Activated B cell treated with CpG ODN at 0.5 μM for 24 hours (primary cell): ENCODE measurements at regions of chr20 and their contacts with region 1.

Region 1: DNA sequence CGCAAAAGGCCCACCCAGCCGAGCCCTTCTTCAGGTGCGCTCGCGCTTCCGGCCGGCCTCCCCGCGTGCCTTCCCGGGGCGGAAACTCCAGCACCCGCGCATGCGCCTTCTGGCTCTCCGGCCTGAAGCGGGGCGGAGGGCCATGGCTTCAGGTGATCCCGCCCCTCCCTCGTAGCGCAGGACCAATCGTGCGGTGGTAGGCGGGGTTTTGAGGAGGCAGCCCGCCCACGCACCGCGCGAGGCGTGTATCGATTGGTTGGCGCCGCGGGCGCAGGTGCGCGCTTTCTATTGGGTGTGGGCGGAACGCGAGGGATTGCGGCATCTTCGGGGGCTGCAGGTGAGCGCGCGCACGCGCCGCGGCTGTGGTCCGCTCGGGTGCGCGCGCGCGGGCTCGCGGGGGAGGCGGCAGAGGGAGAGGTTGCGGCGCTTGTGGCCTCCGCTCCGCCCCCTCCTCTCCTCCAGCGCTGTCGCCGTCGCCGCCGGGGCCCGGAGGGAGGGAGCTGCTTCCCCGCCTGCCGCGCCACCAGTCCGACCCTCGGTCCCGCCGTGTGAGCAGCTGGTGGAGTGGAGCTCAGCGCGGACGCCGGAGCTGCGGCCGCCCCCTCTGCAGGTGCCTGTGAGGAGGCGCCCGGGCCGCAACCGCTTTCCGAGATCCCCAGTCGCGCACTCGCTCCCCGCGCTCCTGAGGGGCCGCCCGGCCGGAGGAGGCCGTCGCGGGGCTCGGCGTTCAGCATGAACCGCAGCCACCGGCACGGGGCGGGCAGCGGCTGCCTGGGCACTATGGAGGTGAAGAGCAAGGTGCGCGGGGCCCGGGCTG is at the start of gene PARD6B:
- DNase-seq: peak; percentile 98
- ATAC-seq: peak; percentile 94
- H3K4me3 Mint-ChIP-seq: peak within 1 kb of the TSS; percentile 89
- H3K27ac Mint-ChIP-seq: peak within 1 kb of the TSS; percentile 71
- H3K4me1 Mint-ChIP-seq: peaks cover 16% of the 10 kb centered on the region
- H3K27me3 Mint-ChIP-seq: peaks cover 2% of the 10 kb centered on the region
- CTCF ChIP-seq: no peak
- total RNA-seq, gene PARD6B: 3.8 and 5.7 TPM in 2 replicates

Region 2: GRCh38 chr20:50460460-50461267 is 270.6 kb before region 1 on chr20:
- CTCF ChIA-PET with region 1: no interaction called
- POLR2A ChIA-PET with region 1: no interaction called
- intact Hi-C with region 1: loop called (anchors 5 kb)
- DNase-seq: peak; percentile 69
- ATAC-seq: peak; percentile 86
- H3K4me3 Mint-ChIP-seq: no peak overlapping the region
- H3K27ac Mint-ChIP-seq: no peak overlapping the region
- H3K4me1 Mint-ChIP-seq: peaks cover 5% of the 10 kb centered on the region
- H3K27me3 Mint-ChIP-seq: peaks cover 24% of the 10 kb centered on the region
- CTCF ChIP-seq: peak; percentile 42

Region 3: GRCh38 chr20:50475681-50476292 is 255.5 kb before region 1 on chr20:
- CTCF ChIA-PET with region 1: no interaction called
- POLR2A ChIA-PET with region 1: no interaction called
- intact Hi-C with region 1: no loop called
- DNase-seq: no peak
- ATAC-seq: no peak
- H3K4me3 Mint-ChIP-seq: no peak overlapping the region
- H3K27ac Mint-ChIP-seq: peak overlapping the region; percentile 31
- H3K4me1 Mint-ChIP-seq: peaks cover 51% of the 10 kb centered on the region
- H3K27me3 Mint-ChIP-seq: no peaks in the 10 kb centered on the region
- CTCF ChIP-seq: no peak

Region 4: DNA sequence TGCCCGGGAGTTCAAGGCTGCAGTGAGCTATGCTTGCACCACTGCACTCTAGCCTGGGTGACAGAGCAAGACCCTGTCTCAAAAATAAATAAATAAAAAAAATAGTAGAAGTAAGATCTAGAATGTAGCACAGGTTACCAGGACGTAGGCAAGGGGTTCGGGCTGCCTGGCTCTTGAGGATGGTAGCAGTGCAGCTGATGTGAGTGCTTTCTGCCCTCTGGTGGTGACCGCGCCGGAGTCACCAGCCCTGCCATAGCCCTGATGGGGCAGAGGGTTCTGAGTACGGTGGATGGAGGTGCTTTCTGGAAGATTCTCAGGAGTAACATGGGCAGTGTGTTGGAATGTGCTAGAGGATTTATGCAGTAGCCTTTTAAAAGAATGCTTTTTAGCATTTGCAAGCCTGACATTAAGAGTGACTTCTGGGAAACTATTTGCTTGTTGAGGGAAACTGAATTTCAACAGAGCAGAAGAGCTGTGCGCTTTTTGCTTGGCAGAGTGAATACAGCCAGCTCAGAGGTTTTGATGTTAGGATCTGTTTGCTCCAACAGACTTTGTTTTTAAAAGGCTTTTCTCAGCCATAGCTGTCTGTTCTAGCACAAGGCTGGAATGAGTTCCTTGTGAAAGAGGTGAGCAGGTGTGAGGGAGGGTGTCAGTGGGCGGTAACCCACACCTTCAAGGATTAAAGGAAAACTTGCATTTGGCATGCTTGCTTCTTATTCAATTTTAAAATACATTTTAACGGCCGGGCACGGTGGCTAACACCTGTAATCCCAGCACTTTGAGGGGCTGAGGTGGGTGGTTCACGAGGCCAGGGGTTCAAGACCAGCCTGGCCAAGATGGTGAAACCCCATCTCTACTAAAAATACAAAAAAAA is 155.2 kb before region 1 on chr20:
- CTCF ChIA-PET with region 1: no interaction called
- POLR2A ChIA-PET with region 1: no interaction called
- intact Hi-C with region 1: loop called (anchors 10 kb)
- DNase-seq: peak; percentile 52
- ATAC-seq: peak; percentile 84
- H3K4me3 Mint-ChIP-seq: no peak overlapping the region
- H3K27ac Mint-ChIP-seq: peak overlapping the region; percentile 77
- H3K4me1 Mint-ChIP-seq: peaks cover 55% of the 10 kb centered on the region
- H3K27me3 Mint-ChIP-seq: no peaks in the 10 kb centered on the region
- CTCF ChIP-seq: peak; percentile 48

Region 5: DNA sequence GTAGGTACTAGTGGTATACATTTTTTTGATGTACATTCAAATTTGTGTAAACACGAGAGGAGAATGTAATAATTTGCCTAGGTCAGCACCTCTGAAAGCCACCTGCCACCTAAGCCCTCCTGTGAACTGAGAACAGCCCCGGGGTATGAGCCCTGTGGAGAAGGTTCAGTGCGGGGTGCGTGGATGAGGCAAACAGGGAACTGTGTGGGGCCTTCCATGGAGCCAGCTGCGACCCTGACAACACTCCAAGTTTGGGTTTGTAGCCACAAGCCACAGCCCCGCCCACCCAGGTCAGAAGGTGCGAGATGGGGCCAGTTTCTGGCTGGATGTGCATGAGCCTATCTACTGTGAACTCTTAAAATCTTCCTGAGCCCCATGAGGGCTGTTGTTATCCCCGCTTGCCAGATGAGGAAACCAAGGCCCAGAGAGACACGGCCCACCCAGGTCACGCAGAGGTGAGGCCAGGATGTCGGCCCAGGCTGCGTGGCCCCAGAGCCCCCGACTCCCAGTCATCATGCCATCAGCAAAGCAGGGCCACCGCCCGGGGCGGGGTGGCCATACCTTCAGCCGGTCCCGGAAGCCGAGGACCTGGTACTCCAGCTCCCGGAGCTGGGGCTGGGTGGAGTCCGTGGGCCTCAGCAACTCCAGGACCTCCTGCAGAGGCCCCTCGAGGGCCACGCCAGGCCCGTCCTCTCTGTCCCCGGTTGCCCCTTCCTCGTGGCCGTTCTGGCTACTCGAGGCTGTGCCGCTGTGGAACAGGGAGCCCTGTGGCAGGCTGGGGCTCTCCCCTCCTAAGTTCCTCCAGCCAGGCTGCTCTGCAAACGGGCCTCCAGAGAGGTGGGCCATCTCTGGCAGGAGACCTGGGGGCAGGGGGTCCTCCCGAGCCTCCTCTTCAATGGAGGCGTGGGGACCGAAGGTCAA is 129.5 kb before region 1 on chr20:
- CTCF ChIA-PET with region 1: no interaction called
- POLR2A ChIA-PET with region 1: no interaction called
- intact Hi-C with region 1: loop called (anchors 5 kb)
- DNase-seq: no peak
- ATAC-seq: no peak
- H3K4me3 Mint-ChIP-seq: no peak overlapping the region
- H3K27ac Mint-ChIP-seq: no peak overlapping the region
- H3K4me1 Mint-ChIP-seq: peaks cover 10% of the 10 kb centered on the region
- H3K27me3 Mint-ChIP-seq: peaks cover 11% of the 10 kb centered on the region
- CTCF ChIP-seq: no peak

Region 6: GRCh38 chr20:50746138-50746940 is 15.1 kb after region 1 on chr20:
- CTCF ChIA-PET with region 1: interaction called, 7 read pairs
- POLR2A ChIA-PET with region 1: interaction called, 3 read pairs
- intact Hi-C with region 1: loop called (anchors 1 kb)
- DNase-seq: no peak
- ATAC-seq: no peak
- H3K4me3 Mint-ChIP-seq: no peak overlapping the region
- H3K27ac Mint-ChIP-seq: no peak overlapping the region
- H3K4me1 Mint-ChIP-seq: peaks cover 8% of the 10 kb centered on the region
- H3K27me3 Mint-ChIP-seq: no peaks in the 10 kb centered on the region
- CTCF ChIP-seq: no peak

Region 7: GRCh38 chr20:50784464-50784863 is 53.2 kb after region 1 on chr20:
- CTCF ChIA-PET with region 1: no interaction called
- POLR2A ChIA-PET with region 1: interaction called, 16 read pairs
- intact Hi-C with region 1: no loop called
- DNase-seq: no peak
- ATAC-seq: no peak
- H3K4me3 Mint-ChIP-seq: no peak overlapping the region
- H3K27ac Mint-ChIP-seq: no peak overlapping the region
- H3K4me1 Mint-ChIP-seq: no peaks in the 10 kb centered on the region
- H3K27me3 Mint-ChIP-seq: peaks cover 9% of the 10 kb centered on the region
- CTCF ChIP-seq: no peak

Region 8: DNA sequence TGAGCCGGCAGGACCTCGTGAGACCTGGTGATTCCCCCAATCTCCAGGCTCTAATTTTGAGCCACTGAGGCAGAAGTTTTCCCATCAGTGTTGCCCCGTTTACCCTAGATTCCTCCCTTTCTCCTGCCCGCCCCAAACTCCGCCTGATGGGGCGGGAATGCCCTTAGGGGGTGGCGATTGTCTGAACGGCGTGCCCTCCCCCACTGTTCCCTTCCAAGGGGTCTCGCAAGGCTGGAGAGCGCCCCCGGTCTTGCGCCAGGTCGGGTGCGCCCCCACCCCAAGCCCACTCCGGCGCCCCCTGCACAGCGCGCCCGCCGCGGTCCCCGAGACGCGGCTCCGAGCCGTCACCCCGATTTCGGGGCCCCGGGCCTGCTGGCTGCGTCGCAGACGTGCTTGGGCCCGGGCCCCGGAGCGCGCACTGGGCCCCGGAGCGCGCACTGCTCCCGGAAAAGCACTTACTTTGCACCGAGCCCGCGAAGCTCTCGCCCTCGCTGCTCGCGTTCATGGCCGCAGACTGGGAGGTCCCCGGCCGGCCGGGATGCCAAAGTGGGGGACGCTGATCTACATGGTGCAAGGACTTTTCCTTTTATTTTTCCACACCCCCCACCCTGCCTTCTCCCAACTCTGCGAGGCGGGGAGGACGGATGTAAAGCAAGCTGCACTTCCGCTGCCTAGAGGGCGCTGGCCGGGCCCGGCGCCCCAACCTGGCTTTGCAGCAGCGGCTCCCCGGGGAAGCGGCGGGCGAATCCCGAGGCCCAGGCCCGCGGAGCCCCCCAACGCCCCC is 1460.1 kb after region 1 on chr20 and contains the start of gene ZFP64:
- CTCF ChIA-PET with region 1: no interaction called
- POLR2A ChIA-PET with region 1: no interaction called
- intact Hi-C with region 1: loop called (anchors 5 kb)
- DNase-seq: peak; percentile 76
- ATAC-seq: peak; percentile 81
- H3K4me3 Mint-ChIP-seq: peak within 1 kb of the TSS; percentile 96
- H3K27ac Mint-ChIP-seq: peak within 1 kb of the TSS; percentile 91
- H3K4me1 Mint-ChIP-seq: peaks cover 18% of the 10 kb centered on the region
- H3K27me3 Mint-ChIP-seq: no peaks in the 10 kb centered on the region
- CTCF ChIP-seq: peak; percentile 18
- total RNA-seq, gene ZFP64: 13.7 and 14.2 TPM in 2 replicates